ENCODE measurements at regions of chr5 and their contacts with region 1.

Region 1: DNA sequence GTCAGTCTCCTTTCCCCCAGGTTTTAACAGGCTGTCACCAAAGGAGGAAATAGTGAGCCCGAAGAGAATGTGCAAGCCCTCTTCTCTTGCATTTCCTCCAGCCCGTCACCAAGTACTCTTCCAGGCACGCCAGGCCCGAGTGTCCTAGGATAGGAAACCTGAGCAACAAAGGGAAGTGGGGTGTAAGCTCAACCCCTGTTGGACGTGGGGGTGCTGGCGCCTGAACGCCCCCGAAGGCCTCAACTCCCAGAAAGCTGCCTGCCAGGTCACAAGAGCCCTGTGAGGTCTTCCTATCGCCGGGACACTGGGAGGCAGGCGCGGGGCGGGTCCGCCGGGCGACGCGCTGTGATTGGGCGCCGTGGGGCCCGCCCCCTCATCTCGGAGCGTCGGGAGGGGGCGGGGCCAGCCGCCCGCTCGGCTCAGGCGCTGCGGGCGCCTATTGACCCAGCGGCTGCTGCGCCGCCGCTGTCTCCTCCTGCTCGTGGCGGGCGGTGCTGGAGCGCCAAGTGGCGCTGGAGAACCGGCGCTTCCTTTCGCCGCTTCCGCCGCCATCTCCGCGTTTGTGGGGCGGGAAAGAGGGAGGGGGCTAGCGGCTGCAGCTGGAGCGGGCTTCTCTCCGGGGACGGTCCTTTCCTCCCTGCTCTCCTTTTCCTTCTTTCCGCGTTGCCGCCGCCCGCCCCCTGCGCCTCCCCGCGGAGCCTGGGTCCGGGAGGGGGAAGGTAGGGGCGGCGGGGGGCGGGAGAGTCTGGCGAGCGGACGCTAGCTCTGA is 572 bp upstream of the MAN2A1 start:
- DNase-seq: peak; percentile 81
- ATAC-seq: peak; percentile 85
- H3K4me3 Mint-ChIP-seq: peak overlapping the region; percentile 87
- H3K27ac Mint-ChIP-seq: peak overlapping the region; percentile 96
- H3K4me1 Mint-ChIP-seq: peaks cover 40% of the 10 kb centered on the region
- H3K27me3 Mint-ChIP-seq: no peaks in the 10 kb centered on the region

Region 2: DNA sequence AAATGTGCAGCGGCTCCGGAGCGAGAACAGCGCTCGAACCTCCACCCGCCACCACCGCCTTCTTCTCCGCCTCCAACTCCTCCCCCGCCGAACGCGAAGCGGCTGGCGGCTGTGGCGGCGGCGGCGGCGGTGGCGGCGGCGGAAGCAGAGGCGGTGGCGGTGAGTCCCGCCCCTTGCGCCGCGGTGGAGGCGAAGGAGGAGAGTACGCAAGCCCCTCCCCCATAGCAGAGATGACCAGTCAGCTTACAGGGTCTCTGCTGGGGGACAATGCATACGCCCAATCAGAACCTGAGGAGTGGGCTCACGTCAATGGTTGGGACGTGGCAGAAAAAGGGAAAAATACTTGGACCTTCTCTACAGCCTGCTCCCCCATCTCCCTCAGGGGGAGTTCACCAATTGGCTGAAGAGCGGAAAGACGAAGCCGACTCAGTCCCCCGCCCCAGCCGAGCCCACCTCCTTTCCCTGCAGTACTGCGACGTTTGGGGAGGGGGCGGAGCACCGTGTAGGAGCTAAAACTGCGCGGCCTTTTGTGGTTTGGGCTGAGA is 279.2 kb before region 1 on chr5 and contains the start of gene PJA2:
- CTCF ChIA-PET with region 1: interaction called, 6 read pairs
- POLR2A ChIA-PET with region 1: interaction called, 15 read pairs
- DNase-seq: peak; percentile 97
- ATAC-seq: peak; percentile 86
- H3K4me3 Mint-ChIP-seq: peak within 1 kb of the TSS; percentile 100
- H3K27ac Mint-ChIP-seq: peak within 1 kb of the TSS; percentile 100
- H3K4me1 Mint-ChIP-seq: peaks cover 32% of the 10 kb centered on the region
- H3K27me3 Mint-ChIP-seq: no peaks in the 10 kb centered on the region
- total RNA-seq, gene PJA2: 50.2 to 53.5 TPM

Region 3: DNA sequence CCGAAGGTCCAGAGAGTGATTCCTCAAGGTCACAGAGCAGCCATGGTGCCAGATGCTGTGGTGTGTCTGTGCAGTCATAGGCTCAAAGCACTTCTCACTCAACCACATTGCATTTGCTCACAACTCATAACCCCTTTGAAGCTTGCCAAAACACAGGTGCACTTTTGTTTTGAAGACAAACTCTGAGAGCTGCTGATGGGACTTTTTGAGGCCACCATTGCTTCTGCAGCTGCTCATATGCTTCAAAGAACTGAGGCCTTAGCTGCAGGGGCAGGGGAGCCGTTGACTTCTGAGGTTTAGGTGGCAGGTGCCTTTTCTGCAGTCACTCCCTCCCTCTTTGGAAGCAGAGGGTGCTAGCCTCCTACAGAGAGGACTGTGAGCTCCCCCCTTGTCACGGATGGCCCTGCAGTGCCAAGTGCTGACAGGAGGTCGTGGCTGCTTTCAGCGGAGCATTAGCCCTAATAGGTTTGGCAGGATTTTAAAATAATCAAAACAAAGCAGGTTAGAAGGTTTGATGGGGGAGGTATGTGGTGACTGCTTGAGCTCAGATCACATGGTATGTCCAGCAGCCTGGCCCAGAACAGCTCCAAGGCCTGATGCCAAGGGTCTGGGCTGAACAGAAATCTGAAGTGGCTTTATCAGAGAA is 232.7 kb after region 1 on chr5:
- CTCF ChIA-PET with region 1: interaction called, 12 read pairs
- POLR2A ChIA-PET with region 1: interaction called, 8 read pairs
- DNase-seq: peak; percentile 41
- ATAC-seq: peak; percentile 71
- H3K4me3 Mint-ChIP-seq: no peak overlapping the region
- H3K27ac Mint-ChIP-seq: peak overlapping the region; percentile 62
- H3K4me1 Mint-ChIP-seq: peaks cover 16% of the 10 kb centered on the region
- H3K27me3 Mint-ChIP-seq: no peaks in the 10 kb centered on the region

Region 4: GRCh38 chr5:110054240-110054639 is 365.1 kb after region 1 on chr5:
- CTCF ChIA-PET with region 1: interaction called, 28 read pairs
- POLR2A ChIA-PET with region 1: interaction called, 5 read pairs
- DNase-seq: peak; percentile 87
- ATAC-seq: peak; percentile 92
- H3K4me3 Mint-ChIP-seq: peak overlapping the region; percentile 29
- H3K27ac Mint-ChIP-seq: peak overlapping the region; percentile 85
- H3K4me1 Mint-ChIP-seq: peaks cover 26% of the 10 kb centered on the region
- H3K27me3 Mint-ChIP-seq: no peaks in the 10 kb centered on the region